ENCODE measurements at regions of chr6 and their contacts with region 1.

Region 1: DNA sequence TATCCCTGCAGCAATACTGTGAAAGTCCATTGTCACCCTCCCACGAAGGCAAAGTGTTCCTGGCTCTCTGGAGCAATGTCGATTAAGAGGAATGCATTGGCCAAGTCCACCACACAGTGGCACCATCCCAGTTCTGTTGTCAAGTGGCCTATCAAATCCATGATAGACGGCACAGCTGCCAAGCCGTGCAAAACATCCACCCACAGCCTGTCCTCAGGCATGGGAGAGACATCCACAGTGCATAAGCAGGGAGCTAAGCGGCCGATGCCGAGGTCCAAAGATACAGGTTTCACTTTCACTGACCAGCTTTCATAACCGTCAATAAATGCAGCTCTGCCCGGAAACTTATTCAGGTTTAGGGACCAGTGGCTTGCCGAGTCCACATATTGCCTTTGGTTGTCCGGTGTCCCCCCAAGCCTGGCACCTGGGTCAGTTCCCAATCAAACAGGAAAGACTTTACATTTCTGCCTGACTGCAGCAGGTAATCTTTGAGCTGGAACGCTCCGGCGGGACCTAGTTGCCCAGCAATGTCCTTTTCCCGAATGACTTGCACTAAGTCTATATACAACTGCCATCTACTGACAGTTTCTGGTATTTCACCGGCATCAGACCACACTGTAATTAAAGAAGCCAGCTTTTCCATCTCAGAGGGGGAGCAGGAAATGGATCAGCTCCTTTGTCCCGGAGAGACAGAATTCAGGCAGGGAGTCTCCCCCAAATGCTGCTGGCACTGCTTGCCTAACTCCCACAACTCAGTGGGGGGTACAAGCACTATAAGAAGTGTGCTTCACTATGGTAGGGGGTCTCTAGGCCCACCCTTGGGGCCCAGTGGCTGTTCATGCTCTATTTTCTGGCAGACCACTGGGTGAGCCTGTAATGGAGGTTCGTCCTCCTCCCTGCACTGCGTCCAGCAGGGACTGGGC is 6.3 kb downstream of the ZKSCAN3 start:
- DNase-seq: peak; percentile 67

Region 2: DNA sequence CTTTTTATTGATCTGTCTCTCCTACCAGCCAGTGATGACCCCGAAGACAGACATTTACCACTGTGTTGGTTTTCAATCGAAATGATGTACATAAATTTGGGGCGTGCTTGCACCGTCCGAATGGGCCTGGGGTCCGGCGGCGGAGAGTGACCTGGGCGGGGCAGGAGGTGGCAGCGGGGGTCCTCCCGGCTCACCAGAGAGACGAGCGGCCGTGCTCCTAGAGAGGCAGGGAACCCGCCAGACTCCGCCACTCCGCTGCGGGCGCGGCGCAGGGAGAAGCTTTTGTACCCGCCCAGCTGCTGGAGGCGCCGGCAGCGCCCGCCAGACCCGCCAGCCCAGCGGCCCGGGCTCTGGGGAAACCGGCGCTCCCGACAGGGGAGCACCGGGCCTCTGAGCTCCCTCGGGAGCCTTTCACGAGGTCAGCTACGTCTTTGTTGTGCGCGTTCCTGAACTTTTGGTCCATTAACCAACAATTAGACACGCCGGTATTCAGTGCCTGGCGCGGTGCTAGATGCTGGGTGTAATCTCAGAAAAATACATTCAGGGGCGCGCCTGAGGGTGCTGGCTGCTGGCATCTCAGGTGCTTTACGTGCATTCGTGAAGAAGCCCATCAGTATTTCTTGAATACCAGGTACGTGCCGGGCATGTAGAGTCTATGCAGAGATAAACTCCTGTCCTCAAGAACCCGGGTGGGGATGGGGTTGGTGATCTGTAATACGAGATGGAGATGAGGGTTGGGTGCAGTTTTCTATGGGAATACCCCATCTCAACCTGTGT is 74.5 kb before region 1 on chr6 and contains the start of gene PGBD1:
- CTCF ChIA-PET with region 1: no interaction called
- POLR2A ChIA-PET with region 1: interaction called, 10 read pairs
- DNase-seq: peak; percentile 87

Measured in HEK293T (cell line).